ENCODE measurements at regions of chr1 and their contacts with region 1.

Region 1: DNA sequence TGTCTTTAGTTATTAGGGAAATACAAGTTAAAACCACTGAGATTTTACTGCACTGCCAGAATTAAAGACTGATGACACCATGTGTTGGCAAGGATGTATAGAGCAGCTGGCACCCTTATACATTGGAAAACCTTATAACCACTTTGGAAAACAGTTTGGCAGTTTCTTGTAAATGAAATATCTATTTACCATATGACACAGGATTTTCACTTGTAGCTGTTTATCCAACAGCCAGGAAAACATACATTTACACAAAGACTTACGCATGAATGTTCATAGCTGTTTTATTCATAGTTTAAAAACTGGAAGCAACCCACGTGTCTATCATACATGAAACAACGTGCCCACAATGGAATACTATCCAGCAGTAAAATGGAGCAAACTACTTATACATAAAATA is 45.3 kb downstream of the PRRC2C start:
- DNase-seq: no peak
- ATAC-seq: no peak
- H3K4me3 ChIP-seq: no peak overlapping the region
- H3K27ac ChIP-seq: no peak overlapping the region
- H3K4me1 ChIP-seq: no peaks in the 10 kb centered on the region
- H3K27me3 ChIP-seq: no peaks in the 10 kb centered on the region
- CTCF ChIP-seq: no peak
- POLR2A ChIP-seq: no peak
- RAD21 ChIP-seq: no peak

Region 2: GRCh38 chr1:171226747-171227370 is 303.8 kb before region 1 on chr1:
- CTCF ChIA-PET with region 1: no interaction called
- POLR2A ChIA-PET with region 1: no interaction called
- dilution Hi-C with region 1: no loop called
- in situ Hi-C with region 1: no loop called
- intact Hi-C with region 1: no loop called
- DNase-seq: peak; percentile 80
- ATAC-seq: peak; percentile 93
- H3K4me3 ChIP-seq: no peak overlapping the region
- H3K27ac ChIP-seq: no peak overlapping the region
- H3K4me1 ChIP-seq: peaks cover 2% of the 10 kb centered on the region
- H3K27me3 ChIP-seq: no peaks in the 10 kb centered on the region
- CTCF ChIP-seq: peak; percentile 95
- POLR2A ChIP-seq: no peak
- RAD21 ChIP-seq: peak; percentile 99

Region 3: DNA sequence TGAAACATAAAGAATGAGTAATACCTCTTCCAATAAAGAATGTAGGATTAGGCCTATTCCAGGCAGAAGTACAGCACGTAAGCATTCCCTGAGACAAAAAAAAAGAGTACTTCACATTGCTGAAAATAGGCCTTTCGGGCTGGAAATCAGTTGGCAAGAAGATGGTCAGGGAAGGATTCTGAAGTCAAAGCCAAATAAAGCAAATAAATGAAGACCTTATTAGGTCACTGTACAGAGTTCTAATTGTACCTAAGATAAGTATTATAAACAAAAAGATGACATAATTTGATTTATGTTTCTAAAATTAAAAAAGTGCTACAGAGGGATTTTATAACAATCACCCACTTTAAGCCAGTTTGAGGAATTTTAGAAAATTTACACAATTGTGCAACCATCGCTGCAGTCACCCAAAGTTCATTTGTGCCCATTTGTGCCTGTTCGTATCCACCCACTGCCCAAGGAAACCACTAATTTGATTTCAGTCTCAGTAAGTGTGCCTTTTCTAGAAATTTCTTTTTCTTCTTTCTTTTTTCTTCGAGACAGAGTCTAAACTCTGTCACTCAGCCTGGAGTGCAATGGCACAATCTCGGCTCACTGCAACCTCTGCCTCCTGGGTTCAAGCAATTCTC is 158.1 kb before region 1 on chr1:
- CTCF ChIA-PET with region 1: no interaction called
- POLR2A ChIA-PET with region 1: no interaction called
- dilution Hi-C with region 1: no loop called
- in situ Hi-C with region 1: no loop called
- intact Hi-C with region 1: no loop called
- DNase-seq: no peak
- ATAC-seq: no peak
- H3K4me3 ChIP-seq: no peak overlapping the region
- H3K27ac ChIP-seq: no peak overlapping the region
- H3K4me1 ChIP-seq: no peaks in the 10 kb centered on the region
- H3K27me3 ChIP-seq: no peaks in the 10 kb centered on the region
- CTCF ChIP-seq: no peak
- POLR2A ChIP-seq: no peak
- RAD21 ChIP-seq: no peak

Region 4: DNA sequence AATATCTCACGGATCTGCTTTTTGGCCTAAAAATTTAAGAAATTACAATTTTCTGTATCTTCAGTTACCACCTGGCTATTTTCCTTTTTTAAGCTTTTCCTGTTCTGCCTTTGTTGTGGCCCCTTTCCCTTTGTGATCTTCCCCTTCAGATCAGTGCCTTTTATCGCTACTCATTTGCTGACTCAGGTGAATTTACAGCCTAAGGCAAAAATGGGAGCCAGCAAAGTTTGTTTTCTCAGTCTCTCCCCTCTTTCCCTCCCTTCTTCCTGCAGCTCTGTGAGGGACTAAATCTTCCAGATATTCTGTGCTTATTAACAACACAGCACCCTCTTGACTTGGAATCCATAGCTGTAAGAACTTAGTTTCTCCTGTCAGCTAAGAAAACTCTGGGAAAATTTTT is 50.6 kb before region 1 on chr1:
- CTCF ChIA-PET with region 1: no interaction called
- POLR2A ChIA-PET with region 1: no interaction called
- dilution Hi-C with region 1: no loop called
- in situ Hi-C with region 1: no loop called
- intact Hi-C with region 1: no loop called
- DNase-seq: no peak
- ATAC-seq: no peak
- H3K4me3 ChIP-seq: no peak overlapping the region
- H3K27ac ChIP-seq: no peak overlapping the region
- H3K4me1 ChIP-seq: no peaks in the 10 kb centered on the region
- H3K27me3 ChIP-seq: no peaks in the 10 kb centered on the region
- CTCF ChIP-seq: no peak
- POLR2A ChIP-seq: no peak
- RAD21 ChIP-seq: no peak

Region 5: GRCh38 chr1:171545523-171545922 is 14.8 kb after region 1 on chr1:
- CTCF ChIA-PET with region 1: interaction called, 5 read pairs
- POLR2A ChIA-PET with region 1: no interaction called
- dilution Hi-C with region 1: no loop called
- in situ Hi-C with region 1: no loop called
- intact Hi-C with region 1: loop called (anchors 2 kb)
- DNase-seq: no peak
- ATAC-seq: no peak
- H3K4me3 ChIP-seq: no peak overlapping the region
- H3K27ac ChIP-seq: no peak overlapping the region
- H3K4me1 ChIP-seq: no peaks in the 10 kb centered on the region
- H3K27me3 ChIP-seq: no peaks in the 10 kb centered on the region
- CTCF ChIP-seq: no peak
- POLR2A ChIP-seq: no peak
- RAD21 ChIP-seq: no peak

Region 6: GRCh38 chr1:171566467-171566866 is 35.8 kb after region 1 on chr1:
- CTCF ChIA-PET with region 1: no interaction called
- POLR2A ChIA-PET with region 1: no interaction called
- dilution Hi-C with region 1: no loop called
- in situ Hi-C with region 1: no loop called
- intact Hi-C with region 1: loop called (anchors 5 kb)
- DNase-seq: no peak
- ATAC-seq: no peak
- H3K4me3 ChIP-seq: no peak overlapping the region
- H3K27ac ChIP-seq: no peak overlapping the region
- H3K4me1 ChIP-seq: no peaks in the 10 kb centered on the region
- H3K27me3 ChIP-seq: no peaks in the 10 kb centered on the region
- CTCF ChIP-seq: no peak
- POLR2A ChIP-seq: no peak
- RAD21 ChIP-seq: no peak

Region 7: GRCh38 chr1:171576144-171576543 is 45.5 kb after region 1 on chr1:
- CTCF ChIA-PET with region 1: no interaction called
- POLR2A ChIA-PET with region 1: no interaction called
- dilution Hi-C with region 1: no loop called
- in situ Hi-C with region 1: no loop called
- intact Hi-C with region 1: loop called (anchors 5 kb)
- DNase-seq: no peak
- ATAC-seq: no peak
- H3K4me3 ChIP-seq: no peak overlapping the region
- H3K27ac ChIP-seq: no peak overlapping the region; the same call in 1 of the 2 replicates
- H3K4me1 ChIP-seq: no peaks in the 10 kb centered on the region
- H3K27me3 ChIP-seq: no peaks in the 10 kb centered on the region
- CTCF ChIP-seq: no peak
- POLR2A ChIP-seq: no peak
- RAD21 ChIP-seq: no peak

Measured in IMR-90 (cell line).